ENCODE measurements at regions of chr2 and their contacts with region 1.

Region 1: GRCh38 chr2:156657809-156658208 is 221.6 kb downstream of the GPD2 start:
- DNase-seq: no peak
- ATAC-seq: no peak

Region 2: GRCh38 chr2:156784020-156784701 is 126.4 kb after region 1 on chr2:
- intact Hi-C with region 1: loop called (anchors 10 kb)
- DNase-seq: no peak
- ATAC-seq: peak; percentile 11

Measured in Right ventricle myocardium superior (tissue), 1 donor.